ENCODE measurements at regions of chr10 and their contacts with region 1.

Region 1: GRCh38 chr10:52488606-52489485 is 174.8 kb downstream of the DKK1 start:
- DNase-seq: peak in 1 of 2 experiments; percentile 10
- H3K4me3 ChIP-seq: no peak overlapping the region
- H3K27ac ChIP-seq: no peak overlapping the region
- H3K4me1 ChIP-seq: peaks cover 23% of the 10 kb centered on the region
- H3K27me3 ChIP-seq: no peaks in the 10 kb centered on the region
- CTCF ChIP-seq: peak; percentile 92

Region 2: DNA sequence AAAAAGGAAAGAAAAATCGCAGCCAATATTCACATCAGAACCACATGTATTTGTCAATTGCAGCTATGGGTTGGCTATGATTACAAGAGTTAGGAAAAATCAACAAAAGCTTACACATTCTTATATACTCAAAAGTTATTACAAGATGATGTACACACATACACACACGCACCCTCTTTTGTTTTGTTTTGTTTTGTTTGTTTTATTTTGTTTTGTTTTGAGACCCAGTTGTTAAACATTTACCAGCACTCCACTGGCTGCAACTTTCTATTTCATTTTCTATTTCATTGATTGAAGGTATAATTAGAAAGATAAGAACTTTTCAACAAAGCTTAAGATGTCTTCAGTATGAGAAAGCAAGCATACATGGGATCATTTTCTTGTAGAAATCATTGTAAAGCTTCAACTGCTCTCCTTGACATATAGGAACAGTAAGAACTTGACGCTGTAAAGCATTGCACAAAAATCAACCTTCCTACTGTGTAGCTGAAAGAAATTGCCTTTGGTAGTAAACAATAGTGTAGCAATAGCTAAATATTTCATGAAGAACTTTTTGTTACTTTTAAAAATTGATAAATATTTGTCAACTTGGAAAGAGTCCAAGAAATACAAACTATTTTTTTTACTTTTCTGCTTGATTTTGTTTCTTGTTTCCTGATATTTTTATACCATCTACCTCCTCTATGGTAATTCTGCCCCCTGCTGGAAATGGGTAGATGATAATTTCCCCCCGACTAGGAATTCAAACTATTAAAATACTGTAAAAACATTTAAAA is 77.8 kb after region 1 on chr10:
- CTCF ChIA-PET with region 1: interaction called, 6 read pairs
- POLR2A ChIA-PET with region 1: no interaction called
- intact Hi-C with region 1: loop called (anchors 1 kb)
- DNase-seq: peak; percentile 25 to 60
- H3K4me3 ChIP-seq: no peak overlapping the region
- H3K27ac ChIP-seq: no peak overlapping the region
- H3K4me1 ChIP-seq: peaks cover 7% of the 10 kb centered on the region
- H3K27me3 ChIP-seq: no peaks in the 10 kb centered on the region
- CTCF ChIP-seq: peak; percentile 78

Region 3: GRCh38 chr10:52729271-52730104 is 240.6 kb after region 1 on chr10:
- CTCF ChIA-PET with region 1: no interaction called
- POLR2A ChIA-PET with region 1: no interaction called
- intact Hi-C with region 1: loop called (anchors 2 kb)
- DNase-seq: peak in 1 of 2 experiments; percentile 47
- H3K4me3 ChIP-seq: no peak overlapping the region
- H3K27ac ChIP-seq: no peak overlapping the region
- H3K4me1 ChIP-seq: no peaks in the 10 kb centered on the region
- H3K27me3 ChIP-seq: no peaks in the 10 kb centered on the region
- CTCF ChIP-seq: peak; percentile 89

Measured in PC-9 (cell line).